MCF 10A (cell line): ENCODE measurements at regions of chr2 and their contacts with region 1.

Region 1: GRCh38 chr2:102473020-102473419 is at the start of gene SLC9A4:
- DNase-seq: peak; percentile 62
- H3K4me3 Mint-ChIP-seq: no peak within 1 kb of the TSS
- H3K27ac Mint-ChIP-seq: no peak within 1 kb of the TSS
- H3K4me1 Mint-ChIP-seq: no peaks in the 10 kb centered on the region
- H3K27me3 Mint-ChIP-seq: peaks cover 11% of the 10 kb centered on the region
- CTCF ChIP-seq: peak; percentile 79
- total RNA-seq, gene SLC9A4: 0.07 TPM in 1 of 2 replicates, not detected in the other

Region 2: GRCh38 chr2:102217032-102217431 is 256.0 kb before region 1 on chr2:
- CTCF ChIA-PET with region 1: no interaction called
- POLR2A ChIA-PET with region 1: no interaction called
- intact Hi-C with region 1: no loop called
- DNase-seq: no peak
- H3K4me3 Mint-ChIP-seq: no peak overlapping the region
- H3K27ac Mint-ChIP-seq: no peak overlapping the region
- H3K4me1 Mint-ChIP-seq: no peaks in the 10 kb centered on the region
- H3K27me3 Mint-ChIP-seq: no peaks in the 10 kb centered on the region
- CTCF ChIP-seq: no peak

Region 3: GRCh38 chr2:102460467-102460866 is 12.6 kb before region 1 on chr2:
- CTCF ChIA-PET with region 1: interaction called, 26 read pairs
- POLR2A ChIA-PET with region 1: interaction called, 3 read pairs
- intact Hi-C with region 1: no loop called
- DNase-seq: peak; percentile 10
- H3K4me3 Mint-ChIP-seq: no peak overlapping the region
- H3K27ac Mint-ChIP-seq: no peak overlapping the region
- H3K4me1 Mint-ChIP-seq: no peaks in the 10 kb centered on the region
- H3K27me3 Mint-ChIP-seq: peaks cover 54% of the 10 kb centered on the region
- CTCF ChIP-seq: no peak

Region 4: DNA sequence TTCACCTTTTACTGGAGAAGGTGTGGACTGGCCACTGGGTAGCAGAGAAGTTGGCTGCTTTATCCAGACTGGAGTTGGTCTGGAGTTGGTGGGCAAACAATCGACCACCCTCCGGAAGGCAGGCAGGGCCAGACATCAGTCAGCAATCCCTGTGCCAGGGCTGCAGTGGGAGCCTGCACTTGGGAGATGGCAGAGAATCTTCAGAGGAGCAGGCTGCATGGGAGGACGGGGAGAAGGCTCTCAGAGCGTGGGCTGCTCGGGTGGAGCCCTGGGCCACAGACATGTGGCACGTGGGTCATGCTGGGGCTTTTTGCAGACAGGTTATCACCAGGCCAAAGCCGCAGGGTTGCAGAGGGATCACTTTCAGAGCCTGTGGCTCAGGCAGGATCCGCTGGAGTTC is 29.6 kb after region 1 on chr2:
- CTCF ChIA-PET with region 1: interaction called, 11 read pairs
- POLR2A ChIA-PET with region 1: no interaction called
- intact Hi-C with region 1: no loop called
- DNase-seq: no peak
- H3K4me3 Mint-ChIP-seq: no peak overlapping the region
- H3K27ac Mint-ChIP-seq: no peak overlapping the region
- H3K4me1 Mint-ChIP-seq: no peaks in the 10 kb centered on the region
- H3K27me3 Mint-ChIP-seq: no peaks in the 10 kb centered on the region
- CTCF ChIP-seq: no peak

Region 5: GRCh38 chr2:102520028-102520427 is 47.0 kb after region 1 on chr2:
- CTCF ChIA-PET with region 1: interaction called, 24 read pairs
- POLR2A ChIA-PET with region 1: interaction called, 3 read pairs
- intact Hi-C with region 1: loop called (anchors 2 kb)
- DNase-seq: peak; percentile 54
- H3K4me3 Mint-ChIP-seq: no peak overlapping the region
- H3K27ac Mint-ChIP-seq: no peak overlapping the region
- H3K4me1 Mint-ChIP-seq: peaks cover 1% of the 10 kb centered on the region
- H3K27me3 Mint-ChIP-seq: no peaks in the 10 kb centered on the region
- CTCF ChIP-seq: peak; percentile 64

Region 6: DNA sequence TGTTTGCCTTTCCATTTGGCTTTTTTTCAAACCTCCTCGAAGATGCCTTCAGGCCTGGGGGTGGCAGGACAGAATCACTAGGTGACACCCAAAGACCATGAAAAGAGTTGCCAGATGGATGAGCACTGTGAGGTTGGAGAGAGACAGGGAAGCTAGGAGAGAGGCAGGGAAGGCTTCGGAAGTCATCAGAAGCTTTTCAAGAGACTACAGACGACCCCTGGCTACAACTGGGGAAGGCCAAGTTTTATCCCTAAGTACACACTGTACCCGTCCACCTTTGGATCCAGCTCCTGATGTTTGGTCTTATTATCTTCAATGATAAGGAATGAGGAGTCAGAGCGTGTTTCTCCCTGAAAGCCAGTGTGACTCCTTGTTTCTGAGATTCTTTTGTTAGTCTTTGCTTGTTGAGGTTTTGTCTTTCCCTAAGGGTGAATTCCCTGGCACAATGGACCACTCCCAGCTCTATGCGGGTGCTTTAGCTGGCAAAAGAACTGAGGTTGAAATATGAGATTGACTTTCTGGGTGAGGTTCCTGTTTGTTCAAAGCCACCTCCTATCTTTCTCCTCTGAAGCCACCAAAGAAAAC is 112.9 kb after region 1 on chr2:
- CTCF ChIA-PET with region 1: interaction called, 31 read pairs
- POLR2A ChIA-PET with region 1: interaction called, 3 read pairs
- intact Hi-C with region 1: no loop called
- DNase-seq: peak; percentile 57
- H3K4me3 Mint-ChIP-seq: no peak overlapping the region
- H3K27ac Mint-ChIP-seq: no peak overlapping the region
- H3K4me1 Mint-ChIP-seq: peaks cover 9% of the 10 kb centered on the region
- H3K27me3 Mint-ChIP-seq: peaks cover 11% of the 10 kb centered on the region
- CTCF ChIP-seq: no peak

Region 7: DNA sequence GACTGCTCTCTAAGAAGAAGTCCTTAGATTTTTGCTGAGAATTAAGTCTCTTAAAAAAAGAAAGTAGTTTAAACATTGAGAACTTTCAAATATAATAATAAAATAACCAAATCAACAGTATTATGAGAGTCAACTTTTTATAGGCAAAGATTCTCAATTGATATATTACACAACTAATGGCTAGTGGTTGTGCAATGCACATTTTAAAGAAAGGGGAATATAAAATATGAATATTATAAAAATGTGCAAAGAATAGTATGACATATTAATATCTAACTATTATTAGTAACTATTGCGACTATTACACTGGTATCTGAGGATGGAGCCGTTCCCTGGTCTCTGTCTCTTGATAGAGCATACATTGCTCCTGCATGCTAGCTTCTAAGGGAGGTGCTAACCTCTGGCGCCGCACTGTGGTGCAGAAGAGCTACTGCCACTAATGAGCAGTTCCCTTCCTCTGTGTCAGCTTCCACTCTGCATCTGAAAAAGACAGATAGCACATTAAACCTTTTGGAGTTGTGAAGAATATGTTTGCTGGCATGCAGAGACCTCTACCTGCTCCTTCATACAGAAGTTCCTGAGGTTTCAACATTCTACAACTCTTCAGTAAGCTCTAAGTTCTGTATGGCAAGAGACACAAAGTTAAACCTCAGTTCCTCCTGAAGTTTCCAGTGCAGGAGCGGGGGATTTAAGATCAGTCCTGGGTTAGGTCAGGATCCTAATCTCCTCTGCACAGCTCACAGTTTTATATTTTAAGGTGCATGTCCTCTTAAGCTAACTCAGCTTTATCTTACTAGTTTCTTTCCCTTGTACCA is 142.8 kb after region 1 on chr2:
- CTCF ChIA-PET with region 1: interaction called, 291 read pairs
- POLR2A ChIA-PET with region 1: interaction called, 9 read pairs
- intact Hi-C with region 1: loop called (anchors 1 kb)
- DNase-seq: peak; percentile 72
- H3K4me3 Mint-ChIP-seq: no peak overlapping the region
- H3K27ac Mint-ChIP-seq: no peak overlapping the region
- H3K4me1 Mint-ChIP-seq: no peaks in the 10 kb centered on the region
- H3K27me3 Mint-ChIP-seq: peaks cover 46% of the 10 kb centered on the region
- CTCF ChIP-seq: peak; percentile 93

Region 8: GRCh38 chr2:102708847-102709559 is 236.0 kb after region 1 on chr2:
- CTCF ChIA-PET with region 1: interaction called, 113 read pairs
- POLR2A ChIA-PET with region 1: no interaction called
- intact Hi-C with region 1: no loop called
- DNase-seq: peak; percentile 70
- H3K4me3 Mint-ChIP-seq: no peak overlapping the region
- H3K27ac Mint-ChIP-seq: no peak overlapping the region
- H3K4me1 Mint-ChIP-seq: peaks cover 6% of the 10 kb centered on the region
- H3K27me3 Mint-ChIP-seq: no peaks in the 10 kb centered on the region
- CTCF ChIP-seq: no peak